ENCODE measurements at regions of chr5 and their contacts with region 1.

Region 1: GRCh38 chr5:88140856-88141752 is 127.5 kb downstream of the TMEM161B start:
- DNase-seq: peak; percentile 93

Region 2: DNA sequence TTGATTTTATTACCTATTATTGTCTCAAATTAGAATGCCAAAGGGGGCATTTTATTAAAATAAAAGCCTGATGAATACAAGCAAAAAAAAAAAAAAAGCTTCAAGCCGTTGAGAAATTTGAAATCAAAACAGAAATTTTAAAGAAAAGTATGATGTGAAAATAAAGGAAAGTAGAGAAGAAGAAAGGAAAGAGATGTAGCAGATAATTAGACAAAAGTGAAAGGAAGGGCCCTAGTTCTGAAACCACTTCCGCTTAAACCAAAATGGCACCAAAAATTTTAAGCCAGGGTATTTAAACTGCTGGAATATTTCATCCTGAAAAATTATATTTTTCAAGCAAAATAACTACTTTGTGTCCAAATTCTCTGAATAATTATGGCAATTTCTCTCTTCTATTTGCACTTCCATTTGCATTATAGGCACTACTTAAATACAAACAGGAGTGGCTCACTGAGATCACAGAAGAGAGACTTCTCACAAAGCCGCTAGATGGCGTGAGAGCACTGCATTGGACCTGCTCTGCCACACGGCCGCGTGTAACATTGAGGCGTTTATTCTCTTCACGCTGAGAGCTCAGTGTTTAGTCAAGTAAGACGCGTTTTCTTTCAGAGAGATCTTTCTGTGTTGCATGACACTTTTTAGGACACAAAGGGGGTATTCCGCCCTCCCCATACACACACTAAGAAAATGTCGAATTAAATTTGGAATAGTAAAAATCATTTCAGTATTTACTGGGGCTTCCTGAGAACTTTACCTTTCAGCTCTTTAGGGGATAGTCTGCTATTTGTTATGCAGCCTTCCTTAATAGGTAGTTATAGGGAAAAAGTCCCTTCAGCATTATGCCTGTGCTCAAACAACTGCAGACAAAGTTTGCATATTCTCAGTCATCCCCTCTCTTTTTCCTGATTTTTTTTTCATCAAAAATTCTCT is 360.0 kb before region 1 on chr5:
- intact Hi-C with region 1: loop called (anchors 10 kb)
- DNase-seq: peak; percentile 84

Region 3: DNA sequence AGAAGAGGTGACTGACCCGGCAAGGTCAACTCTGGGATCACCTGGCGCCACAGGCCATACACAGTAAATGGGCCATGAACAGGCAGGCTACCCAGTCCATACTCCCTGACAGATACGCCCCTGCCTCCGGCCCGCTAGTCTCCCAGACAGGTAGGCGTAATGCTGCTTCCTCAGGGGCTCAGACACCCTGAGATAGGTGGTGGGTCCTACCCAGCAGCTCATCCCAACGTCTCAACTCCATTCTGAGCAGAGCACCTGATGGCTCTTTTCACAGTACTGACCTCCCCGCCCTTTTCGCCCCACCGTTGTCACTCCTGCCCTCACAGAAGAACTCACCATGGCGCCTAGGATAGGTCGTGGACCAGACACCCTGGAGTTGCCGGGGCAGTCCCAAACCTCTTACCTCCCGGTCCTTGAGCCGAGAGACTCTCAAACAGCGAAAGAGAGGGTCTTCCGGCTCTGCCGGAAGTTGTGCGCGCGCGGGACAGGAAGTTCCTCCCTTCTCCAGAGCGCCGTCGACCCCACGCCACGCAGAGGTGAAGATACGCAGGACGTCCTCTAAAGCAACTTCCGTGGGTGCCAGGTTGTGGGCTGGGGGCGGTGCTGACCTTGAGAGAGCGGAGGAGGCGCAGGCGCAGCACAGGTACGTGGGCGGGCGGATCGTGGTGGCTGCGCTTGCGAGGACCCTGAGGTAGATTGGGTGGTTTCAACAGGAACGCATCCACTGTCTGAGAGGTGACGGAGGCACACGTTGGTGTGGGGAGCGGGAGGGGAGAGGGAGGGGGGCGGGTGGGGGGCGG is 127.5 kb after region 1 on chr5 and contains the start of gene TMEM161B:
- intact Hi-C with region 1: loop called (anchors 5 kb)
- DNase-seq: peak; percentile 93
- total RNA-seq, gene TMEM161B: 9.0 TPM

Region 4: DNA sequence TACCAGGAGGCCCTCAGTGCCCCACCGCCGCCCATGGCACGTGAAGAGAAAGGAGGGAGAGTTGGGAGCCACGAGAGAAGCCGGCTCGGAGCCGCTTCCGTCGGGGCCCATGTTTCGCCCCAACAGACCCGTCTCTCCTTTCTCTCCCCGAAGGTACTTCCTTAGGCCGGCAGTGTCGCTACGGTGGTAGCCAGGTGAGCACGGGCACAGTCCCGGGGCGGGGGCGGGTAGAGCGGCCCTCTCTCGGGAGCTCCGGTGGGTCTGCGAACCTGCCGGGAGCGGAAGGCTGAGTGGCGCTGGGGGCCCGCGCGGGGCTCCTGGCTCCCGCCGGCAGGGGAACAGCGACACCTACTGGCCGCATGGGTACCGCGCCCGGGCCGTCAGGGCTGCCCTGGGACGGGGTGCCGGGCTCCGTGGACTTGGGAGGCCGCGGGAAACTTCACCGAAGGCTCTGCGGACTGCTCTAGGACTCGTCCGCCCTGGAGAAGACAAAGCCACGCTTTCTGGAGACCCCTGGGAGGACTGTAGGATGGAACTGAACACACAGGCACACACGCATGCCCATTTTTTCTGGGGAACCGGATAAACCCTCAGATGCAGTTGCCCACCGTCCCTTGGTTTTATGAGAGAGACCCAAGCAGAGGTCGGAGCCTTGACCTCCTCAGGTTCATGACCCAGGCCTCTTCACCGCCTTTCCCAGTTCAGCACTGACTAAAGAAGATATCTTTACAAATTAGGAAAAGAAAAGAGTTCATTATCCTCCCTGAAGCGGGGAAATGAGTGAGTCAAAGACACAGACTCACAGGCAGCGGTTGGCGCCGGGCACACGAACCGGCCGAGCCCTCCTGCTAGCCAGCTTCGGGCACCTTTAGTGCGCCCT is 539.4 kb after region 1 on chr5:
- intact Hi-C with region 1: loop called (anchors 5 kb)
- DNase-seq: peak; percentile 87